Heart left ventricle (tissue), 16 donors: ENCODE measurements at regions of chr10 and their contacts with region 1.

Region 1: GRCh38 chr10:29304264-29305030 is 15.6 kb downstream of the LYZL1 start:
- DNase-seq: peak in 3 of 5 donors; percentile 40 to 49 (median 42)
- ATAC-seq: peak; percentile 73 to 88 (median 80)
- H3K4me3 ChIP-seq: peak overlapping the region in 3 of 12 donors; percentile 3 to 11 (median 7)
- H3K27ac ChIP-seq: peak overlapping the region in 5 of 12 donors; percentile 16 to 49 (median 36)
- H3K4me1 ChIP-seq: peaks cover 0 to 10% (median 5%) of the 10 kb centered on the region in 12 donors
- H3K27me3 ChIP-seq: peaks cover 0 to 6% (median 0%) of the 10 kb centered on the region in 9 donors
- CTCF ChIP-seq: peak; percentile 62 to 90 (median 78)
- POLR2A ChIP-seq: no peak

Region 2: GRCh38 chr10:28151636-28152035 is 1152.8 kb before region 1 on chr10:
- intact Hi-C with region 1: no loop called
- DNase-seq: no peak
- ATAC-seq: no peak
- H3K4me3 ChIP-seq: no peak overlapping the region
- H3K27ac ChIP-seq: no peak overlapping the region
- H3K4me1 ChIP-seq: no peaks in the 10 kb centered on the region
- H3K27me3 ChIP-seq: no peaks in the 10 kb centered on the region
- CTCF ChIP-seq: no peak
- POLR2A ChIP-seq: no peak

Region 3: DNA sequence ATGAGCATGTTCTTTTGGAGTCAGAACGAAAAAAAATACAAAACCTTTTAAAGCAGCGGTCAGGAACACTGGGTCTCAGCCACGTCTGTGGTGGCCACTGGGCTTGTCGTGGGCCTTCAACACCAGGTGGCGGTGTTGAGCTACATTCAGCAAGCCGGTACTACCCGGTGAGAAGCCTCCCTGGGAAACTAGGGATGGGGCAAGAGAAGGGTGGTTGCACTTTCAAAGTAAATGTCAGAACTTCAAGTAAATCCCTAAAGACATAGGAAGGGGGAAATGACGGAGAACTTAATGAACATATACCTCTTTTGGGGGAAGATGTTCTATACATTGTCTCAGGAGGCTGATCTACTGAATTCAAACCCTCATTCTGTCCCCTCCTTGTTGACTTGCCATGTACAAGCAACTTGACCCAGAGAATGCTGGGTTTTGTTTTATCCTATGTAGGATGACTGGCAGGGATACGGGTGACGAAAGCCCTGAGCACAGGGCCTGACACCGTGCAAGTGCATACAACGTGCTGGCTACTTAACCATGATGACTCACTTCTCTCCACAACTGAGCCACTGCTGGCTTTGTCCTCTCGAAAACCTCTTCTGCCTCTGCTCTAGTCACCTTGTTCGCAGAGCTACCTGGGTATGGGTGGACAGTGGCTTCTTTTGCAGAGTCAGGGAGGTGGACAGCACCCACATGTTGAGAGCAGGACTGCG is 676.1 kb before region 1 on chr10:
- intact Hi-C with region 1: loop called in 8 of 10 experiments (anchors 1 to 10 kb)
- DNase-seq: peak; percentile 68 to 86 (median 76)
- ATAC-seq: peak; percentile 28 to 93 (median 88)
- H3K4me3 ChIP-seq: no peak overlapping the region
- H3K27ac ChIP-seq: no peak overlapping the region
- H3K4me1 ChIP-seq: peaks cover 0 to 8% (median 0%) of the 10 kb centered on the region in 12 donors
- H3K27me3 ChIP-seq: peaks cover 0 to 10% (median 0%) of the 10 kb centered on the region in 9 donors
- CTCF ChIP-seq: peak; percentile 77 to 98 (median 85)
- POLR2A ChIP-seq: no peak

Region 4: DNA sequence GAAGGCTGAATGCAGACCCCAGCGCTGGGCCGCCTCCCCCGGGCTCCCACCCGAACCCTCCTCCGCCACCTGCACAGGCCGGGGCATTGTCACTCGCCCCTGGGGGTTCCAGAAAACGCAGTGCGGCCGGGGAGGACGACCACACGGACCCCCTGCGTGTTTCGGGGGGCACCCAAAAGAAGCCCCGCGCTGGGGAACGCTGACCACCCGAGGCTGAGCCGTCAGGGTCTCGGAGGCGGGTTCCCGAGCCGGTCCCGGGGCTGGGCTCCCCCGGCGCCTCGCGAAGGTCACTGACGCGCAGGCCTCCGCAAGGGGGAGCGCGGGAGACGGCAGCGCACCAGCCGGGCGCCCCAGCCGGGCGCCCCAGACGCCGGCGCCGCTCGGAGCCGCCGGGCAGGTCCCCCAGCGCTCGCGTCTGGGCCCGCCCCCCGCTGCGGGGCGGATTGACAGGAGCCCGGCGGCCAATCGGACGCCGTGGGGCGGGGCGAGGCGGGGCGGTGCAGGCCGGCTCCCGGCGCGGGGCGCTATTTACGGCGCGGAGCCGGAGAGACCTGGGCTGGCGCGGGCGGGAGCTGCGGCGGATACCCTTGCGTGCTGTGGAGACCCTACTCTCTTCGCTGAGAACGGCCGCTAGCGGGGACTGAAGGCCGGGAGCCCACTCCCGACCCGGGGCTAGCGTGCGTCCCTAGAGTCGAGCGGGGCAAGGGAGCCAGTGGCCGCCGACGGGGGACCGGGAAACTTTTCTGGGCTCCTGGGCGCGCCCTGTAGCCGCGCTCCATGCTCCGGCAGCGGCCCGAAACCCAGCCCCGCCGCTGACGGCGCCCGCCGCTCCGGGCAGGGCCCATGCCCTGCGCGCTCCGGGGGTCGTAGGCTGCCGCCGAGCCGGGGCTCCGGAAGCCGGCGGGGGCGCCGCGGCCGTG is 627.2 kb before region 1 on chr10 and contains the start of gene BAMBI:
- intact Hi-C with region 1: loop called in 1 of 10 experiments (anchors 5 kb)
- DNase-seq: peak; percentile 93 to 96 (median 93)
- ATAC-seq: peak; percentile 92 to 98 (median 97)
- H3K4me3 ChIP-seq: peak within 1 kb of the TSS; percentile 66 to 97 (median 84)
- H3K27ac ChIP-seq: peak within 1 kb of the TSS; percentile 61 to 90 (median 83)
- H3K4me1 ChIP-seq: peaks cover 0 to 44% (median 17%) of the 10 kb centered on the region in 12 donors
- H3K27me3 ChIP-seq: peaks cover 0 to 83% (median 5%) of the 10 kb centered on the region in 9 donors
- CTCF ChIP-seq: peak; percentile 28 to 80 (median 68)
- POLR2A ChIP-seq: peak; percentile 95 to 100
- total RNA-seq, gene BAMBI: 10.8 to 44.7 (median 24.8) TPM

Region 5: DNA sequence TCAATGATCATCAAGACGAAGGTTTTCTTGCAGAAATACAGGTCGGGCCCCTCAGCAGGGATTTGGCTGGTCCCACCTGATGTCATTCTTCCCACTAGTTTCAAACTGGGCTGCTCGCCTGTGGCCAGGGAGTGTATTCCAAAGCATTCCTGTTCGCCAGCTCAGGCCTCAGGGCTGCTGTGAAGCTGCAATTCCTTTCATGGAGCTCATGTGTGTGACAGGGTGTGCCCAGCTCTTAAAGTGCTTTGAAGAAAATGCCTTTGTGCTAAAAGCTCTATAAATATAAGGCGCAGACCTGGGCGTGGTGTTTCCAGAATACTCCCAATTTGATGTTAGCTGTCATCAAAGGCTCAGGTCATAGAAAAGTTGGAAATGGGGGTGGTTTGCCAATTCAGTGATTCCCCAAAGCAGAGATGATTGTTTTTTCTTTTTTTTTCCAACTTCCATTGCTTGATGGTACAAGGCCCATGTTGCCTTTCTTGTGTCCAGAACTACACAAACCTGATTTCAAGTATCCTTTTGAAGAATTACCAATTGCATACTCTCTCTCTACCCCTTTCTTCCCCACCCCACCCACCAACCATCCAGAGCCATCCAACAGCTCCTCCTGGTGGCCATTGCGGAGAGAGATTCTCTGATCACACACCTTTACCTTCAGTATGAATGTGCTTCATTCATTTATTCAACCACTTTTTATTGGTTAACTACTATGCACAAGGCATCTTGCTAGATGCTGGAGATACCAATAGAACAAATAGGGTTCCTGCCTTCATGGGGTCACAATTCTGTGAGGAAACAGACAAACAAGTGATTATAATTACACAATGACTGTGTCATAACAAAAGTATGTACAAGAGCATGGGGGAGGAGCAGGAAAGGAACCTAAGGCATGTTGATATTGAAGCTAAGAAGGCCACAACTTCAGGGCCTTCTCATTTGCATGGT is 312.8 kb before region 1 on chr10:
- intact Hi-C with region 1: loop called in 2 of 10 experiments (anchors 5 to 10 kb)
- DNase-seq: peak in 4 of 5 donors; percentile 24 to 42 (median 38)
- ATAC-seq: peak; percentile 66 to 90 (median 88)
- H3K4me3 ChIP-seq: no peak overlapping the region
- H3K27ac ChIP-seq: peak overlapping the region in 3 of 12 donors; percentile 17 to 71 (median 39)
- H3K4me1 ChIP-seq: peaks cover 0 to 7% (median 0%) of the 10 kb centered on the region in 12 donors
- H3K27me3 ChIP-seq: no peaks in the 10 kb centered on the region
- CTCF ChIP-seq: peak; percentile 59 to 78 (median 68)
- POLR2A ChIP-seq: no peak

Region 6: DNA sequence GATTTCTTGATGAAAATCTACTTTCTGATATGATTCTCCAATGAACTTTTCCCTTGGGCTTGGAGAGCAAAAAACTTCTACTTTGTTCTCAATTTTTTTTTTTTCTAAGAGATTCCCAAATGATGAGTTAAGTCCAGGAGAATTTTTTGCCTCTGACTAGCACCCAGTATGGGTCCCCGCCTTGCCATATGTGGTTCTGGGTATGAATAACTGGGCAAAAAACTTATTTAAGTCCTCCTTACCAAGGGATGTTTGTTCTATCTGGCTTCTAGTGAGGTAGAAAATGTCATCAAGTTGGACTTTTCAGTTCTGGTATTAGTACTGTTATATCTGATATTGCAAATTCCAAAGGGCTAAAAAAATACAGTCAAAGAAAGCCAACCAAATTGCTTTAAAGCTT is 163.4 kb before region 1 on chr10:
- intact Hi-C with region 1: loop called in 4 of 10 experiments (anchors 10 kb)
- DNase-seq: no peak
- ATAC-seq: no peak
- H3K4me3 ChIP-seq: no peak overlapping the region
- H3K27ac ChIP-seq: no peak overlapping the region
- H3K4me1 ChIP-seq: peaks cover 0 to 6% (median 0%) of the 10 kb centered on the region in 12 donors
- H3K27me3 ChIP-seq: no peaks in the 10 kb centered on the region
- CTCF ChIP-seq: no peak
- POLR2A ChIP-seq: no peak

Region 7: GRCh38 chr10:29249018-29249417 is 55.4 kb before region 1 on chr10:
- intact Hi-C with region 1: no loop called
- DNase-seq: no peak
- ATAC-seq: no peak
- H3K4me3 ChIP-seq: no peak overlapping the region
- H3K27ac ChIP-seq: no peak overlapping the region
- H3K4me1 ChIP-seq: peaks cover 0 to 15% (median 0%) of the 10 kb centered on the region in 12 donors
- H3K27me3 ChIP-seq: no peaks in the 10 kb centered on the region
- CTCF ChIP-seq: no peak
- POLR2A ChIP-seq: no peak